Vagina (tissue), 2 donors: ENCODE measurements at regions of chr9 and their contacts with region 1.

Region 1: GRCh38 chr9:24881361-24881760 is 335.7 kb upstream of the IZUMO3 start:
- DNase-seq: no peak
- H3K4me3 ChIP-seq: no peak overlapping the region
- H3K27ac ChIP-seq: no peak overlapping the region
- H3K4me1 ChIP-seq: no peaks in the 10 kb centered on the region
- H3K27me3 ChIP-seq: no peaks in the 10 kb centered on the region
- CTCF ChIP-seq: no peak
- POLR2A ChIP-seq: no peak

Region 2: GRCh38 chr9:23492126-23493002 is 1389.0 kb before region 1 on chr9:
- intact Hi-C with region 1: loop called (anchors 5 kb)
- DNase-seq: no peak
- H3K4me3 ChIP-seq: no peak overlapping the region
- H3K27ac ChIP-seq: no peak overlapping the region
- H3K4me1 ChIP-seq: no peaks in the 10 kb centered on the region
- H3K27me3 ChIP-seq: no peaks in the 10 kb centered on the region
- CTCF ChIP-seq: no peak
- POLR2A ChIP-seq: no peak

Region 3: GRCh38 chr9:24817756-24818155 is 63.6 kb before region 1 on chr9:
- intact Hi-C with region 1: no loop called
- DNase-seq: no peak
- H3K4me3 ChIP-seq: no peak overlapping the region
- H3K27ac ChIP-seq: no peak overlapping the region
- H3K4me1 ChIP-seq: no peaks in the 10 kb centered on the region
- H3K27me3 ChIP-seq: no peaks in the 10 kb centered on the region
- CTCF ChIP-seq: no peak
- POLR2A ChIP-seq: no peak

Region 4: GRCh38 chr9:24953070-24953469 is 71.7 kb after region 1 on chr9:
- intact Hi-C with region 1: no loop called
- DNase-seq: no peak
- H3K4me3 ChIP-seq: no peak overlapping the region
- H3K27ac ChIP-seq: no peak overlapping the region
- H3K4me1 ChIP-seq: no peaks in the 10 kb centered on the region
- H3K27me3 ChIP-seq: no peaks in the 10 kb centered on the region
- CTCF ChIP-seq: no peak
- POLR2A ChIP-seq: no peak

Region 5: DNA sequence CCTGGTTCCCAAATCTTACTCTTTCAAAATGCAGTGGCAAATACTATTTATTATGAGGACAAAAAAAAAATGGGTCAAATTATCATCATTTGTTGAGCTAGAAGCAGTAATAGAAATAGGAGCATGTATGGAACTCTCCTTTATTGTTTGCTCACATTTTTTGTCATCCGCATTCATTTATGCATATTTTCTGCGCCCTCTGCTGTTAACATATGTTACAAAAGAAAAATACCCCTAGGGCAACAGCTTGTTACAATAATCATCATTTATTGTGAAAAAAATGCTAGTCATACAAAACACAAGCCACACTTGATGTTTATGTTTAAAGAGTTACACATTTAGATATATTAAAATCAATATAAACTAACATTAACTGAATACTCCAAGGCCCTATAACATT is 468.6 kb after region 1 on chr9:
- intact Hi-C with region 1: no loop called
- DNase-seq: no peak
- H3K4me3 ChIP-seq: no peak overlapping the region
- H3K27ac ChIP-seq: no peak overlapping the region
- H3K4me1 ChIP-seq: no peaks in the 10 kb centered on the region
- H3K27me3 ChIP-seq: no peaks in the 10 kb centered on the region
- CTCF ChIP-seq: no peak
- POLR2A ChIP-seq: no peak